Activated CD4-positive, alpha-beta memory T cell treated with anti-CD3 and anti-CD28 coated beads, Interleukin-2, amount 10 ng/mL, durations not matched to agents 7 days and 5 days (primary cell): ENCODE measurements at regions of chr13 and their contacts with region 1.

Region 1: GRCh38 chr13:36999054-36999714 is at the start of gene ALG5:
- DNase-seq: peak; percentile 94
- H3K4me3 Mint-ChIP-seq: peak within 1 kb of the TSS; percentile 98
- H3K27ac Mint-ChIP-seq: peak within 1 kb of the TSS; percentile 100
- H3K4me1 Mint-ChIP-seq: peaks cover 39% of the 10 kb centered on the region
- H3K27me3 Mint-ChIP-seq: no peaks in the 10 kb centered on the region
- total RNA-seq, gene ALG5: 36.3 to 36.6 TPM

Region 2: GRCh38 chr13:36346222-36347083 is 652.7 kb before region 1 on chr13 and contains the start of gene SPART:
- CTCF ChIA-PET with region 1: no interaction called
- POLR2A ChIA-PET with region 1: interaction called, 10 read pairs
- DNase-seq: peak; percentile 89
- H3K4me3 Mint-ChIP-seq: peak within 1 kb of the TSS; percentile 88
- H3K27ac Mint-ChIP-seq: peak within 1 kb of the TSS; percentile 91
- H3K4me1 Mint-ChIP-seq: peaks cover 27% of the 10 kb centered on the region
- H3K27me3 Mint-ChIP-seq: peaks cover 13% of the 10 kb centered on the region
- total RNA-seq, gene SPART: 23.6 to 24.0 TPM

Region 3: GRCh38 chr13:36818804-36819738 is 180.1 kb before region 1 on chr13 and contains the start of gene RFXAP:
- CTCF ChIA-PET with region 1: interaction called, 4 read pairs
- POLR2A ChIA-PET with region 1: interaction called, 11 read pairs
- DNase-seq: peak; percentile 92
- H3K4me3 Mint-ChIP-seq: peak within 1 kb of the TSS; percentile 94
- H3K27ac Mint-ChIP-seq: peak within 1 kb of the TSS; percentile 93
- H3K4me1 Mint-ChIP-seq: peaks cover 48% of the 10 kb centered on the region
- H3K27me3 Mint-ChIP-seq: peaks cover 16% of the 10 kb centered on the region
- total RNA-seq, gene RFXAP: 15.3 to 16.1 TPM

Region 4: GRCh38 chr13:37011002-37011401 is 11.8 kb after region 1 on chr13:
- CTCF ChIA-PET with region 1: interaction called, 9 read pairs
- POLR2A ChIA-PET with region 1: interaction called, 49 read pairs
- DNase-seq: no peak
- H3K4me3 Mint-ChIP-seq: no peak overlapping the region
- H3K27ac Mint-ChIP-seq: no peak overlapping the region
- H3K4me1 Mint-ChIP-seq: peaks cover 9% of the 10 kb centered on the region
- H3K27me3 Mint-ChIP-seq: no peaks in the 10 kb centered on the region

Region 5: GRCh38 chr13:37023871-37024270 is 24.7 kb after region 1 on chr13:
- CTCF ChIA-PET with region 1: no interaction called
- POLR2A ChIA-PET with region 1: interaction called, 18 read pairs
- DNase-seq: no peak
- H3K4me3 Mint-ChIP-seq: no peak overlapping the region
- H3K27ac Mint-ChIP-seq: no peak overlapping the region
- H3K4me1 Mint-ChIP-seq: no peaks in the 10 kb centered on the region
- H3K27me3 Mint-ChIP-seq: no peaks in the 10 kb centered on the region

Region 6: GRCh38 chr13:37058910-37059847 is 60.0 kb after region 1 on chr13 and contains the start of gene SUPT20H:
- CTCF ChIA-PET with region 1: no interaction called
- POLR2A ChIA-PET with region 1: interaction called, 49 read pairs
- DNase-seq: peak; percentile 95
- H3K4me3 Mint-ChIP-seq: peak within 1 kb of the TSS; percentile 95
- H3K27ac Mint-ChIP-seq: peak within 1 kb of the TSS; percentile 96
- H3K4me1 Mint-ChIP-seq: peaks cover 26% of the 10 kb centered on the region
- H3K27me3 Mint-ChIP-seq: peaks cover 2% of the 10 kb centered on the region
- total RNA-seq, gene SUPT20H: 70.7 to 70.9 TPM